ENCODE measurements at regions of chr6 and their contacts with region 1.

Region 1: DNA sequence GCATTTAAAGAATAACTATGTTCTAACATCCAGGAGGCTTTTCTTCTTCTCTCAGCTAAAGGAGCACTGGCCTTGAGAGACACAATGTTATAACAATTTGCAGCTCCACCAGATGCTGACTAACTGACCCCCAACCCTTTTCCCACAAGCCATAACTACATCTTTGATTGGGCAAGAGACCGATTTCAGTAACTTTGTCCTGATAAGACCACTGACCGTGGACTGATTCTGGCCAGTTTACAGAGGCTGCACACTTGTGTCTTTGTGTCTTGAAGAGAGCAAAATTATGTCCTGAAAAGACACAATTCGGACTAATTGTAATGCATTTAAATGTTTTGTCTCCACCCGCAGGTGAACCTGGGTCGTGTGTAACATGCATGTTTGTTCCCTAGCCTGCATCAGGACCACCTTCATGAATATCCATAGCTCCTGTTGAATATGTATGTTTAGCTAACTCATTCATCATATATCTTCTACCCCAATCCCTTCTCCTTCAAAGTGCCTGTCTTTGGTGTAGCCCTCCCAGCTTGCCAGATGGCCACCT is 22.3 kb downstream of the ABRACL start:
- DNase-seq: peak in 1 of 2 donors; percentile 21
- ATAC-seq: no peak
- H3K4me3 ChIP-seq: no peak overlapping the region
- H3K4me3 Mint-ChIP-seq: no peak overlapping the region
- H3K27ac ChIP-seq: no peak overlapping the region
- H3K27ac Mint-ChIP-seq: no peak overlapping the region
- H3K4me1 ChIP-seq: no peaks in the 10 kb centered on the region
- H3K4me1 Mint-ChIP-seq: peaks cover 0 to 6% of the 10 kb centered on the region in 2 donors
- H3K27me3 ChIP-seq: no peaks in the 10 kb centered on the region
- H3K27me3 Mint-ChIP-seq: no peaks in the 10 kb centered on the region
- CTCF ChIP-seq: no peak

Region 2: DNA sequence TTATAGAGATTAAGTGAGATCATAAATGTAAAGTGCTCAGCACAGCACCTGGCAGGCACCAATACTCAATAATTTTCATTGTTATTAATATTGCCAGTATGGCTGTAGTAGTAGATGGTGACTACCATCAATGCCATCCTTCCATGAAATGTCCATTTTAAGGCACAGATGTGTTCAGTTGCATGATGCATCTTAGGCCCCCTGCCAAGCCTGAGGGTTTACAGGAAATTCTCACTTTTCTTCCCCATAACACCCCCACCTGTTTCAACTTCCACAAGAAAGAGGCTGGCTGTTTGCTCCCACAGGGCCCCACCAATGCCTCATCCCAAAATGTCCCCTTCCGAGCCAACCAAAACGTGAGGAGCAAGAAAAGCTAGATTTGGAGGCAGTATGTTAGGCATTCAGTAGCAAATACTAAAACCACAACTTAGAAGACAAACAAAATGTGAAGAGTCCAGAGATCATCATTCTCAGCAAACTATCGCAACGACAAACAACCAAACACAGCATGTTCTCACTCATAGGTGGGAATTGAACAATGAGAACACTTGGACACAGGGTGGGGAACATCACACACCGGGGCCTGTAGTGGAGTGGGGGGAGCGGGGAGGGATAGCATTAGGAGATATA is 440.9 kb before region 1 on chr6:
- intact Hi-C with region 1: loop called (anchors 5 kb)
- DNase-seq: no peak
- ATAC-seq: no peak
- H3K4me3 ChIP-seq: no peak overlapping the region
- H3K4me3 Mint-ChIP-seq: no peak overlapping the region
- H3K27ac ChIP-seq: no peak overlapping the region
- H3K27ac Mint-ChIP-seq: no peak overlapping the region
- H3K4me1 ChIP-seq: no peaks in the 10 kb centered on the region
- H3K4me1 Mint-ChIP-seq: no peaks in the 10 kb centered on the region
- H3K27me3 ChIP-seq: no peaks in the 10 kb centered on the region
- H3K27me3 Mint-ChIP-seq: peaks cover 0 to 6% of the 10 kb centered on the region in 2 donors
- CTCF ChIP-seq: no peak

Region 3: DNA sequence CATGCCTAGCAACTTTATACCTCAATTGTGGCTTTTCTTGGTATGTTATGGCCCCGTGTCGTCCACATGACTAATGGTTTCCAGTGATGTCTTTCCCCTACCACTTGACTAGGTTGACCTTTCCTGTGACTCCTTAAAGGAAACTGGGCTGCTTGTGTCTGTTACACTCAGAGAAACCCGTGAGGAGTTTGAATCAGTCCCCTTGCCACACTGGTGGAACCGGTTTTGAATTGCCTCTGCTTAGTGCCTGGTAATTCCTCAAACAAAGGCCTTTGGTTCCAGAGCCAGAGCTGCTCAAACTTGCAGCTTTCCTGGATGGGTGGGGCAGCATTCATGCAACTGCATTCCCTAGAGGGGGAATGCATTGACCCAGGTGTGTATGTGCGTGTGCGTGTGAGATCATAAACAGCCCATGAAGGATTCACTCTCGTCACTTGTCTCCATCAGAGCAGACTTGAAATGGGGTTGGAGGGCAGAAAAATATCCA is 233.0 kb before region 1 on chr6:
- intact Hi-C with region 1: loop called (anchors 10 kb)
- DNase-seq: no peak
- ATAC-seq: no peak
- H3K4me3 ChIP-seq: no peak overlapping the region
- H3K4me3 Mint-ChIP-seq: no peak overlapping the region
- H3K27ac ChIP-seq: no peak overlapping the region
- H3K27ac Mint-ChIP-seq: no peak overlapping the region
- H3K4me1 ChIP-seq: no peaks in the 10 kb centered on the region
- H3K4me1 Mint-ChIP-seq: no peaks in the 10 kb centered on the region
- H3K27me3 ChIP-seq: no peaks in the 10 kb centered on the region
- H3K27me3 Mint-ChIP-seq: peaks cover 3 to 7% of the 10 kb centered on the region in 2 donors
- CTCF ChIP-seq: no peak

Region 4: GRCh38 chr6:138944412-138944811 is 106.4 kb before region 1 on chr6:
- intact Hi-C with region 1: no loop called
- DNase-seq: peak in 1 of 2 donors; percentile 67
- ATAC-seq: peak; percentile 79 to 96 (median 83)
- H3K4me3 ChIP-seq: no peak overlapping the region
- H3K4me3 Mint-ChIP-seq: peak overlapping the region; percentile 17
- H3K27ac ChIP-seq: peak overlapping the region; percentile 8
- H3K27ac Mint-ChIP-seq: peak overlapping the region; percentile 24 to 73
- H3K4me1 ChIP-seq: peaks cover 4% of the 10 kb centered on the region
- H3K4me1 Mint-ChIP-seq: peaks cover 37 to 42% of the 10 kb centered on the region in 2 donors
- H3K27me3 ChIP-seq: no peaks in the 10 kb centered on the region
- H3K27me3 Mint-ChIP-seq: peaks cover 0 to 2% of the 10 kb centered on the region in 2 donors
- CTCF ChIP-seq: no peak

Measured in natural killer cell (primary cell).